ENCODE measurements at regions of chr13 and their contacts with region 1.

Region 1: GRCh38 chr13:51148952-51149573 is 38.0 kb upstream of the C13orf42 start:
- DNase-seq: peak in 1 of 2 experiments; percentile 59
- H3K4me3 ChIP-seq: no peak overlapping the region
- H3K4me3 Mint-ChIP-seq: no peak overlapping the region
- H3K27ac Mint-ChIP-seq: no peak overlapping the region
- H3K4me1 ChIP-seq: no peaks in the 10 kb centered on the region
- H3K4me1 Mint-ChIP-seq: peaks cover 4% of the 10 kb centered on the region
- H3K27me3 ChIP-seq: no peaks in the 10 kb centered on the region
- H3K27me3 Mint-ChIP-seq: peaks cover 3% of the 10 kb centered on the region
- CTCF ChIP-seq: peak; percentile 70 to 74

Region 2: DNA sequence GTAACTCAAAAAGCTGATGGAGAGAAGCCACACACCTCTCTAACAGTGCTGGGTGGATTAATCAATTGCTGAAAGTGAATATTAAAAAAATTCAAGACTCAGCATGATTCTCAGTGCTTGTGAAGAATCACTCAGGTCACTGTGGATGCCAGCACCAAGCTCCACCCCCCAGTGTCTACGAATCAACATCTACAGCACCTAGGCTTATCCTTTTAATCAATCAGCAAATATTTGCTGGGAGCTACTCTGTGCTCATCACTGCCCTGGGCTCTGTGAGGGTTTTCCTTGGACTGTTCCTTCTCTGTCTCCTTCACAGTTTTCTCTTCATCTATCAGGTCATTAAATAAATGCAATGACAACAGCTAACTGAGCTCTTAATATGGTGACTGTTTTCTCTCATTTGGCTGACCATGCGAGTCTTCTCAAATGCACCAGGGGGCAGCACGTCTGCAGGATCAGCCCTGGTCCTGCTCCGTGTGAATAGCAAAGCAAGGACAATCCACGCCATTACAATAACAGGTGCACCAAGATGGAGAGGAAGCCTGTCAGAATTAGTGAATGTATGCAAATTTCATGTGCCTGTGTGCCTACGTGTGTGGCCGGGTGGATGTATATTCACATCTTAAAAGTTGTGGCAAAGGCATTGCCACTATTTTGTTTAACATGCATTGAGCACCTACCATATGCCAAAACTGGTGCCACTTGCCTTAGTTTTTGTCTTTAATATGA is 23.4 kb before region 1 on chr13:
- CTCF ChIA-PET with region 1: interaction called, 10 read pairs
- POLR2A ChIA-PET with region 1: no interaction called
- intact Hi-C with region 1: no loop called
- DNase-seq: peak; percentile 60 to 66
- H3K4me3 ChIP-seq: no peak overlapping the region
- H3K4me3 Mint-ChIP-seq: no peak overlapping the region
- H3K27ac Mint-ChIP-seq: no peak overlapping the region
- H3K4me1 ChIP-seq: peaks cover 36% of the 10 kb centered on the region
- H3K4me1 Mint-ChIP-seq: peaks cover 18% of the 10 kb centered on the region
- H3K27me3 ChIP-seq: no peaks in the 10 kb centered on the region
- H3K27me3 Mint-ChIP-seq: no peaks in the 10 kb centered on the region
- CTCF ChIP-seq: peak; percentile 67 to 75

Region 3: GRCh38 chr13:51222037-51222685 is 73.1 kb after region 1 on chr13 and contains the start of gene FAM124A:
- CTCF ChIA-PET with region 1: interaction called, 3 read pairs
- POLR2A ChIA-PET with region 1: no interaction called
- intact Hi-C with region 1: loop called (anchors 1 kb)
- DNase-seq: peak in 1 of 2 experiments; percentile 76
- H3K4me3 ChIP-seq: peak within 1 kb of the TSS; percentile 50
- H3K4me3 Mint-ChIP-seq: peak within 1 kb of the TSS; percentile 67
- H3K27ac Mint-ChIP-seq: no peak within 1 kb of the TSS
- H3K4me1 ChIP-seq: peaks cover 5% of the 10 kb centered on the region; the same call in 1 of the 2 replicates
- H3K4me1 Mint-ChIP-seq: no peaks in the 10 kb centered on the region
- H3K27me3 ChIP-seq: peaks cover 4% of the 10 kb centered on the region
- H3K27me3 Mint-ChIP-seq: peaks cover 26% of the 10 kb centered on the region
- CTCF ChIP-seq: peak in 1 of 2 experiments; percentile 10
- total RNA-seq, gene FAM124A: 0.46 and 0.52 TPM in 2 replicates

Region 4: DNA sequence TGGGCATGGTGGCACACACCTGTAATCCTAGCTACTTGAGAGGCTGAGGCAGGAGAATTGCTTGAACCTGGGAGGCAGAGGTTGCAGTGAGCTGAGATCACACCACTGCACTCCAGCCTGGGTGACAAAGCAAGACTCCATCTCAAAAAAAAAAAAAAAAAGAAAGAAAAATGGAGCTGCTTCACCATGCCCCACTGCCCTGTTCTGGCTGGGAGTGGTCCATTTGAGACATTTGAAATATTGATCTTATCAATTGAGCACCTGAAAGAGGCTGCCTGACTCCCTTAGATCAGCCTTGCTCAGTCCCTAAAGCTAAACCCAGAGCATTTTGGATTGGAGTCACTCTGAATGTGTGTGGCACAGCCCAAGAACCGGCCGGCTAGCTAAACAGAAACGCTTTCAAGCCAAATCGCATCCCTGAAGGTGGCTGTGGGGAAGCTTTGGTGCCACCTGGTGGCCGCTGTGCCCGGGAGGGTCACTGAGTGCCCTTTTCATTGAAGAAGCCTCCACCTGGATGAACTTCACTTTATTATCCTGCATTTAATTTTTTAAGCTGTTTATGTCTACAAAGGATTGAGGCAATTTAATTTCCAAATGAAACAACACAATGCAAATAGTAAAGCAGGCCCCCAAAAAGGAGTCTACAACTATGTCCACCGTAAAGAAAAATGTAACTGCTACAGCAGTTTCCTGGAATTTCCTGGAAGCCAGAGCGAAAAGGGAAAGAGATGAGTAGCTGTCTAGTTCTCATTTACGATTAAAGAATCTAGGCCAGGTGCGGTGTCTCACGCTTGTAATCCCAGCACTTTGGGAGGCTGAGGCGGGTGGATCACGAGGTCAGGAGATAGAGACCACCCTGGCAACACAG is 137.3 kb after region 1 on chr13:
- CTCF ChIA-PET with region 1: interaction called, 62 read pairs
- POLR2A ChIA-PET with region 1: interaction called, 14 read pairs
- intact Hi-C with region 1: loop called (anchors 1 kb)
- DNase-seq: peak; percentile 77 to 87
- H3K4me3 ChIP-seq: no peak overlapping the region
- H3K4me3 Mint-ChIP-seq: no peak overlapping the region
- H3K27ac Mint-ChIP-seq: no peak overlapping the region
- H3K4me1 ChIP-seq: no peaks in the 10 kb centered on the region
- H3K4me1 Mint-ChIP-seq: peaks cover 7% of the 10 kb centered on the region
- H3K27me3 ChIP-seq: no peaks in the 10 kb centered on the region
- H3K27me3 Mint-ChIP-seq: no peaks in the 10 kb centered on the region
- CTCF ChIP-seq: peak; percentile 91 to 97

Region 5: DNA sequence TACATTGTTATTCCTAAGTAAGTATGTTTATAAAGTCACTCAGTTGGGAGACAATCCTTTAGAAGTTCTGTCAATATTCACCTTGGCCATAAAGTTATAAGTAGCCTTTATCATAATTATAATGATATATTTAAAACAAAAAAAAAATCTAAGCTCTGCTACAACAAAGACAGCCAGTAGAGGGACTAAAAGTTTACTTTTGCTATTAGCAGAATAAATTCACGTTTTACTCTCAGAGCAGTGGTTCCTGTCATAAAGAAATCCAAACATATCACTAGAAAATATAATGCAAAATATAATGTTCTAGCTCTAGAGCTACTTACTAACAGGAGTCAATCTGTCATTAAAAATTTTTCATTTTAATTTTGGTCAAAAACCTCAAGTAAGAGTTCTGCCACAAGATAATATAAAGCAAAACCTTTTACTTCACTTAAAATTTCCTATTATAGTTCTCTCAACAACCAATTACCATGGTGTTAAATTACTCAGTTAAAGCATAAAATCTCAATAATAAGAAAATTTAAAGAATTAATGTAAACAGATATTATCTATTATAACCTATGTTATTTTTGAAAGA is 286.0 kb after region 1 on chr13:
- CTCF ChIA-PET with region 1: no interaction called
- POLR2A ChIA-PET with region 1: no interaction called
- intact Hi-C with region 1: loop called (anchors 5 kb)
- DNase-seq: no peak
- H3K4me3 ChIP-seq: no peak overlapping the region
- H3K4me3 Mint-ChIP-seq: no peak overlapping the region
- H3K27ac Mint-ChIP-seq: no peak overlapping the region
- H3K4me1 ChIP-seq: peaks cover 3% of the 10 kb centered on the region; the same call in 1 of the 2 replicates
- H3K4me1 Mint-ChIP-seq: no peaks in the 10 kb centered on the region
- H3K27me3 ChIP-seq: no peaks in the 10 kb centered on the region
- H3K27me3 Mint-ChIP-seq: no peaks in the 10 kb centered on the region
- CTCF ChIP-seq: peak; percentile 55

Region 6: GRCh38 chr13:51632591-51633362 is 483.7 kb after region 1 on chr13:
- CTCF ChIA-PET with region 1: no interaction called
- POLR2A ChIA-PET with region 1: no interaction called
- intact Hi-C with region 1: no loop called
- DNase-seq: no peak
- H3K4me3 ChIP-seq: no peak overlapping the region
- H3K4me3 Mint-ChIP-seq: no peak overlapping the region
- H3K27ac Mint-ChIP-seq: no peak overlapping the region
- H3K4me1 ChIP-seq: peaks cover 22% of the 10 kb centered on the region
- H3K4me1 Mint-ChIP-seq: peaks cover 23% of the 10 kb centered on the region
- H3K27me3 ChIP-seq: no peaks in the 10 kb centered on the region
- H3K27me3 Mint-ChIP-seq: no peaks in the 10 kb centered on the region
- CTCF ChIP-seq: no peak

Region 7: DNA sequence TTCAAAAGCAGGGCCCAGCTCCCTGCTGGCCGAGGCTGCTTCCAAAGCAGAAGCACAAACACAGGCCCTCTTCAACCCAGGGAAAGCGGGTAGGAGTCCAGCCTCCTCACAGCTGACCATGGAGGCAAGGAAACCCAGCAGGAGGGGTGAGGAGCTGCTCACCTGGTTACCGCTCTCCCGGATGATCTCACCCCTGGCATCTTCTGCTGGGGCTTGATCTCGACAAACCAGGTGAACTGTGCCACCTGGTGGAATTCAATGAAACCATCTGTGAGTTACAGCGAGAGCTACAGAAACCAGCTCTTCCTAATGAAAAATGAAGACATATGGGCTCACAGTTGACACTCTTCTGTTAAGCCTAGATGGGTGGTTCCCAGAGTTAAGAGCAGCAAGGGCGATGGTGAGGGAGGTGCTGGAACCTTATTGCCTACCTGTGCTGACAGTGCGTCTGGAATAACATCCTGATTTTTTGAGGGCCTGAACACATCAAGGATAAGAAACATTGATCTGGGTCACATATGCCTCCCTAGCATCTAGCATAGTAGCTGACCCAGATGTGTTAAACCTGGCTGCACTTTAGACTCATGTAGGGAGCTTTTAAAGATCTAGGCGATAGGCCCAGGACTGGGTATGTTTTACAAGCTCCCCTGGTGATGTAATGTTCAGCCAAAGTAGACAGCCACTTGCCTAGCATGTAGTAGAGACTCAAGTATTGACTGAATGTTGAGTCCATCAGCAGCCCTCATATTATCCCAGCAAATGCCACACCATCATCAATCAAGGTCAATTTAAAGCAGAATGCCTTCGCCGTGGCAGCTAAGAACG is 648.8 kb after region 1 on chr13:
- CTCF ChIA-PET with region 1: interaction called, 9 read pairs
- POLR2A ChIA-PET with region 1: no interaction called
- intact Hi-C with region 1: loop called (anchors 5 kb)
- DNase-seq: peak; percentile 68 to 72
- H3K4me3 ChIP-seq: no peak overlapping the region
- H3K4me3 Mint-ChIP-seq: no peak overlapping the region
- H3K27ac Mint-ChIP-seq: no peak overlapping the region
- H3K4me1 ChIP-seq: peaks cover 13% of the 10 kb centered on the region; the same call in 1 of the 2 replicates
- H3K4me1 Mint-ChIP-seq: no peaks in the 10 kb centered on the region
- H3K27me3 ChIP-seq: no peaks in the 10 kb centered on the region
- H3K27me3 Mint-ChIP-seq: no peaks in the 10 kb centered on the region
- CTCF ChIP-seq: peak; percentile 59 to 69

Measured in Caco-2 (cell line).